Dendritic cell treated with granulocyte-macrophage colony-stimulating factor and Interleukin-4, amounts not matched to agents 40 ng/mL and 50 ng/mL, for 4 days (primary cell): ENCODE measurements at regions of chr2 and their contacts with region 1.

Region 1: GRCh38 chr2:65018141-65018582 is 29.0 kb downstream of the SLC1A4 start:
- H3K4me3 Mint-ChIP-seq: peak overlapping the region; percentile 60
- H3K27ac Mint-ChIP-seq: peak overlapping the region; percentile 93
- H3K4me1 Mint-ChIP-seq: peaks cover 62% of the 10 kb centered on the region
- H3K27me3 Mint-ChIP-seq: no peaks in the 10 kb centered on the region

Region 2: GRCh38 chr2:63581298-63581961 is 1436.7 kb before region 1 on chr2:
- intact Hi-C with region 1: no loop called
- H3K4me3 Mint-ChIP-seq: no peak overlapping the region
- H3K27ac Mint-ChIP-seq: peak overlapping the region; percentile 74
- H3K4me1 Mint-ChIP-seq: peaks cover 27% of the 10 kb centered on the region
- H3K27me3 Mint-ChIP-seq: no peaks in the 10 kb centered on the region

Region 3: GRCh38 chr2:64988420-64989125 is 29.6 kb before region 1 on chr2:
- intact Hi-C with region 1: loop called (anchors 2 kb)
- H3K4me3 Mint-ChIP-seq: peak overlapping the region; percentile 80
- H3K27ac Mint-ChIP-seq: peak overlapping the region; percentile 75
- H3K4me1 Mint-ChIP-seq: peaks cover 64% of the 10 kb centered on the region
- H3K27me3 Mint-ChIP-seq: peaks cover 4% of the 10 kb centered on the region